ENCODE measurements at regions of chr18 and their contacts with region 1.

Region 1: DNA sequence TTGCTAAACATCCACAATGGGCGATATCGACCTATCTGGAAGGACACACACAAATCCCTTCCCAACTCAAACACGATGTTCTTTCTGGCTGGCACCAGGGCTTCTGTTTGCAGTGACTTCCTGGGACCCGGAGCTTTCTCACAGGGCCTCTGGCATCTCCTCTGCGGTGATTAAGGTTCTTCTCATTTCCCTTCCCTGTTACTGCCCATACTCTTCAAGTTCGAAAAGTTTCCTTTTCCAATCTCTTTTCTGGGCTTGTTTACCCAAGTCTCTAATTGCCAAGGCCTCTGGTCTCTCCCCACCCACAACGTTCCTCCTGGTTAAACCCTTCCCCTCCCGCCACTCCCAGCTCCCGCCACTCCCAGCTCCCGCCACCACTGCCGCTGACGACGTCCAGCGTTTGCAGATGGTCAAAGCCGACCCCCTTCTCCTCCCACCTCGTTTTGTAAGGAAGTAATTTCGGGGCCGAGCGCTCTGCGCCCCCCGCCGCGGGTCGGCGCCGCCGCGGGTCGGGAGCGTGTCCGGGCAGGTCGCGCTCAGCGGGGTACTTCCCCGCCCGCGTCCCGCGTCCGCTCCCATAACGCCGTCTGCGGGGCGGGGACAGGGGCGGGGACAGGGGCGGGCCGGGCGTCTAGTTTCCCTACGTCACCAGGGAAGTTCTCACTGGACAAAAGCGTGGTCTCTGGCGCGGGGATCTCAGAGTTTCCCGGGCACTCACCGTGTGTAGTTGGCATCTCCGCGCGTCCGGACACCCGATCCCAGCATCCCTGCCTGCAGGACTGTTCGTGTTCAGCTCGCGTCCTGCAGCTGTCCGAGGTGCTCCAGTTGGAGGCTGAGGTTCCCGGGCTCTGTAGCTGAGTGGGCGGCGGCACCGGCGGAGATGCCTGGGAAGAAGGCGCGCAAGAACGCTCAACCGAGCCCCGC is at the start of gene PMAIP1:
- DNase-seq: peak; percentile 69
- H3K4me3 ChIP-seq: peak within 1 kb of the TSS; percentile 79
- CTCF ChIP-seq: no peak

Region 2: GRCh38 chr18:59685501-59685900 is 214.1 kb before region 1 on chr18:
- CTCF ChIA-PET with region 1: no interaction called
- POLR2A ChIA-PET with region 1: no interaction called
- DNase-seq: no peak
- H3K4me3 ChIP-seq: no peak overlapping the region
- CTCF ChIP-seq: no peak

Region 3: DNA sequence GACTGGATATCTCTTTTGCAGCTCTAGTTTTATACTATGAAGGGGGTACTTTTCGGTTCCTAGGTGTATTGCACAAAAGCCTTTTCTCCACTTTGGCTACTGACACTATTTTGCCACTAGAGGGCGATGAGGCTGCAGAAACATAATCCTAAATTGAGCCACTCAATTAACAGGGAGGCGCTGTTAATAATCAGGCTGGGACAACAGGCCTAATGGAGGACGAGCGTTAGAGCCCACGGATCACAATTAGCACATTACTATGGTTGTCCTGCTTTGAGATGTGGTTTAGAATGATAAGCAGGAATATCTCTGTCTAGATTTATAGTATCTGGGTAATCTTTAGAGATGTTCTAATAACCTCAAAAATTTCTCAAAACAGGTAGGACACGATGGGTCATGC is 62.0 kb before region 1 on chr18:
- CTCF ChIA-PET with region 1: interaction called, 19 read pairs
- POLR2A ChIA-PET with region 1: interaction called, 4 read pairs
- DNase-seq: no peak
- H3K4me3 ChIP-seq: no peak overlapping the region
- CTCF ChIP-seq: peak; percentile 79

Region 4: GRCh38 chr18:59870623-59871130 is 28.9 kb before region 1 on chr18:
- CTCF ChIA-PET with region 1: interaction called, 3 read pairs
- POLR2A ChIA-PET with region 1: interaction called, 11 read pairs
- DNase-seq: no peak
- H3K4me3 ChIP-seq: no peak overlapping the region
- CTCF ChIP-seq: no peak

Region 5: GRCh38 chr18:59885579-59886163 is 13.9 kb before region 1 on chr18:
- CTCF ChIA-PET with region 1: interaction called, 3 read pairs
- POLR2A ChIA-PET with region 1: interaction called, 20 read pairs
- DNase-seq: no peak
- H3K4me3 ChIP-seq: peak overlapping the region; percentile 7
- CTCF ChIP-seq: no peak

Region 6: DNA sequence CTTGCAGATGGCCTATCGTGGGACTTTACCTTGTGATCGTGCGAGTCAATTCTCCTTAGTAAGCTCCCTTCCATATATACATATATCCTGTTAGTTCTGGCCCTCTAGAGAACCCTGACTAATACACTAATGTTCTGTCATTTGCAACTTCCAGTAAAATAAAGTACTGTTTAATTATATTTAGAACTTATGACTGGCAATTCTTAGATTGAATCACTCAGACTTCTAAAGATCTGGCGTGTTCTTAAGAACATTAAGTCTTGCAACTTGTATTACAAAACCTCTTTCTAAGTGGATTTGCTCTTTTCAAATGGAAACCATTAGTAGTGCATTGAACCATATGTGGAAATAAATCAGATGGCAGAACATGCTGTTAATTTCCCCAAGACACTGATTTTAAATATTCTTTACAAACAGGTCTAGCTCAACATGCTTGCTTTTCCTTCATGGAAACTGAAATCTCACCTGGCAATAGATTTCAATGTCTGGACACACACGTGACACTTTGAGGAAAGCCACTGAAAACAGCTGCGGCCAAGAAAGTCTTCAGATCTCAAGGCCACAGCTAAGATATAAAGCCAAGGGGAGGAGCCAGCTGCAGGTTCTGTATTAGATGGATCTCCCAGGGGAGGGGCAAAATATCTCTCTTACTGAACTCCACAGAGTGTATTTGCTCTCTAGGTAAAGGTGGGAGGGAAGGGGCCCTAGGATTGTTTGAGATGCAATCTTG is 50.8 kb after region 1 on chr18:
- CTCF ChIA-PET with region 1: no interaction called
- POLR2A ChIA-PET with region 1: interaction called, 13 read pairs
- DNase-seq: no peak
- H3K4me3 ChIP-seq: no peak overlapping the region
- CTCF ChIP-seq: no peak